A673 (cell line): ENCODE measurements at regions of chr9 and their contacts with region 1.

Region 1: DNA sequence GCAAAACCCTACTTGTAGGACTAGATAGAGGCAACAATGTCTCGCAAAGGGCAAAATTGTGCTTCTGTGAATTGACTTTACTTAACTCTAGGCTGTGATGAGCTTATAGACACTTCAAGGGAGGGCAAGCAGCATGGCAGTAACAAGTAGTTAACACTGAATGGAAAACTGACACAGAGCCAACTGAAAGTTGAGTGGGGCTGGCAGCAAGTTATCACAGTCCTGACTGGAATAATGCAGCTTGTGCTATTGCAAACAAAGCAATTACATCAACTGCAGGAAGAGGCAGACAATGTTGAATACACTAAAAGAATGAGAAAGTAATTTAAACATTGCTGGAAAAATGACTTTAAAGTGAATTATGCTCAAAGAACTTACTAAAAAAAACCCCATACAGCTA is 62.2 kb downstream of the RNF38 start:
- DNase-seq: no peak
- H3K4me3 ChIP-seq: no peak overlapping the region
- H3K27ac ChIP-seq: no peak overlapping the region
- H3K4me1 ChIP-seq: no peaks in the 10 kb centered on the region
- H3K27me3 ChIP-seq: no peaks in the 10 kb centered on the region
- CTCF ChIP-seq: no peak

Region 2: DNA sequence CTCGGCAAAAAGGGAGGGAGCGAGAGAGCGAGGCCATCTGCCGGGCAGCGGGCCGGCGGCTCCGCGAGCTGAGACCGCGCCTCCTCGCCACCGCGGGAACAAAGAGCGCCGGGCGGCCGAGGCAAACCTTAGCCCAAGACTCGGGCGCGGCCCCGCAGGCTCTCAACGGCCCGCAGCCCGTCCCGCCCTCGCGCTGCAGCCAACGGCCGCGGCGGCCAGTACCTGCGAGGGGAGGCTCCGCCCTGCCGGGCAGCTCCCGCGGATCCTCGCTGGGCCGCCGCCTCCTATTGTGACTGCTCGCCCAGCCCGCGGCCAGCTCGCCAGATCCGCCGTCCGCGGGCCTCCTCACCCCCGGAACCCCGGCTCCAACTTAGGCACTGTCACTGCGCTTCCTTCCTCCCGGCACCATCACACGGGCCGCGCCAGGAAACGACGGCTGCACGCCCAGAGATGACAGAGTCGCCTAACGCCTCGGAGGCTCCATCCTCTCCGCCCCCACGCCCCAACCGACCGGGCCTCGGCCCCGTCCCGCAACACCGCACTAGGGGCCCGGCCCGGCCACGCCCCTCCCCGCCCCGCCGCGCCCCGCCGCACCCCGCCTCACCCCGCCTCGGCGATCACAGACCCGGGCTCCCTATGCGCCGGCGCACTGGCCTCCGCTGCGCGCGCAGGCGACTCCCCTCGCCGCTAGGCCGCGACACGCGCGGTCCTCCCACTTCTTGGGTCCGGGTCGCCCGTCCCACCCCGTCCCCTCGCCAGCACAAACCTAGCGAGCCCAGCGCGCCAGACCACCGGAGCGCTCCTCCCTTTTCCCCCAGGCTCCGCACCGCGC is 62.7 kb after region 1 on chr9:
- CTCF ChIA-PET with region 1: no interaction called
- POLR2A ChIA-PET with region 1: interaction called, 18 read pairs
- intact Hi-C with region 1: no loop called
- DNase-seq: peak; percentile 92
- H3K4me3 ChIP-seq: peak overlapping the region; percentile 96
- H3K27ac ChIP-seq: peak overlapping the region; percentile 83
- H3K4me1 ChIP-seq: peaks cover 8% of the 10 kb centered on the region
- H3K27me3 ChIP-seq: no peaks in the 10 kb centered on the region
- CTCF ChIP-seq: no peak